ENCODE measurements at regions of chr2 and their contacts with region 1.

Region 1: GRCh38 chr2:152445791-152446201 is 110.8 kb downstream of the FMNL2 start:
- DNase-seq: no peak
- H3K4me3 Mint-ChIP-seq: no peak overlapping the region
- H3K27ac Mint-ChIP-seq: peak overlapping the region; percentile 45
- H3K4me1 Mint-ChIP-seq: peaks cover 11% of the 10 kb centered on the region
- H3K27me3 Mint-ChIP-seq: peaks cover 6% of the 10 kb centered on the region

Region 2: GRCh38 chr2:152415231-152415642 is 30.6 kb before region 1 on chr2:
- intact Hi-C with region 1: loop called (anchors 1 kb)
- DNase-seq: peak; percentile 59
- H3K4me3 Mint-ChIP-seq: peak overlapping the region; percentile 24
- H3K27ac Mint-ChIP-seq: peak overlapping the region; percentile 87
- H3K4me1 Mint-ChIP-seq: peaks cover 31% of the 10 kb centered on the region
- H3K27me3 Mint-ChIP-seq: no peaks in the 10 kb centered on the region